ENCODE measurements at regions of chr17 and their contacts with region 1.

Region 1: GRCh38 chr17:43125133-43125966 is at the start of gene BRCA1:
- DNase-seq: peak; percentile 94 to 96
- H3K4me3 ChIP-seq: peak within 1 kb of the TSS; percentile 56 to 60
- H3K27ac ChIP-seq: peak within 1 kb of the TSS; percentile 75 to 81
- H3K4me1 ChIP-seq: peaks cover 0 to 25% (median 18%) of the 10 kb centered on the region in 4 donors
- H3K27me3 ChIP-seq: no peaks in the 10 kb centered on the region
- CTCF ChIP-seq: no peak

Region 2: DNA sequence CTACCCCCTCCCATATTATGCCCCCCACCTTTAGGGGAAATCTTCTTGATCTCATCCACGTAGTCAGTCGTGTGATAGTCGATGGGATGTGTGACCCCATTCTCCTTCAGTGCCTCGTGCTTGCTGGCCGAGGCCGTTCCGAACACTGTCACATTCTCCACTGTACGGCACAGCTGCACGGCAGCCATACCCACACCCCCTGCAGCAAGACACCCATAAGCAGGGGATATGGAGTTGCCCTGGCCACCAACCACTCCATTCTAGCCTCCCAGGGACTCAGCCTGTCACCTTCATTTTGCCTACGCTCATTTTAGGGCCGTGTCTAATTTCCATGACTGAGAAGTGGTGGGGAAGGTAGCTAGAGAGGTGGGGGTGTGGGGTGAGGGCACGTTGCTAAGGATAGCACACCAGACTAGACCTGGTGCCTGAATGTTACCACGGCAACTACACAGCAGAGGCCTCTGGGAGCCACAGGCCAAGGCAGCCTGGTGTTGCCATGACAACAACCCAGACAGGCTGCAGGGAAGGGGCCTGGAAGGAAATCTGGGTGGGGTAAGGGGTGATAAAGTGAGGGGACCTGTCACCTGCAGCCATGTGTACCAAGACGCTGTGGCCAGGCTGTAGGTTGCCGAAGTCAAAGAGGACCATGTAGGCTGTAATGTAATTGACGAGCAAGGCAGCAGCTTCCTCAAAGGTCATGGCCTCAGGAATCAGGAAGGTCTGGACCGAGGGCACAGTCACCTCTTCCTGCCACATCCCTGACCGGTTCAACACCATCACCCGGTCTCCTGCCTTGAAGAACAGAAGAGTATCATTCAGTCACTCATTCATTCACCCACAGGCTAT is 107.1 kb before region 1 on chr17:
- intact Hi-C with region 1: loop called (anchors 5 kb)
- DNase-seq: no peak
- H3K4me3 ChIP-seq: no peak overlapping the region
- H3K27ac ChIP-seq: peak overlapping the region in 1 of 2 donors; percentile 23
- H3K4me1 ChIP-seq: peaks cover 0 to 29% (median 22%) of the 10 kb centered on the region in 4 donors
- H3K27me3 ChIP-seq: no peaks in the 10 kb centered on the region
- CTCF ChIP-seq: no peak

Region 3: DNA sequence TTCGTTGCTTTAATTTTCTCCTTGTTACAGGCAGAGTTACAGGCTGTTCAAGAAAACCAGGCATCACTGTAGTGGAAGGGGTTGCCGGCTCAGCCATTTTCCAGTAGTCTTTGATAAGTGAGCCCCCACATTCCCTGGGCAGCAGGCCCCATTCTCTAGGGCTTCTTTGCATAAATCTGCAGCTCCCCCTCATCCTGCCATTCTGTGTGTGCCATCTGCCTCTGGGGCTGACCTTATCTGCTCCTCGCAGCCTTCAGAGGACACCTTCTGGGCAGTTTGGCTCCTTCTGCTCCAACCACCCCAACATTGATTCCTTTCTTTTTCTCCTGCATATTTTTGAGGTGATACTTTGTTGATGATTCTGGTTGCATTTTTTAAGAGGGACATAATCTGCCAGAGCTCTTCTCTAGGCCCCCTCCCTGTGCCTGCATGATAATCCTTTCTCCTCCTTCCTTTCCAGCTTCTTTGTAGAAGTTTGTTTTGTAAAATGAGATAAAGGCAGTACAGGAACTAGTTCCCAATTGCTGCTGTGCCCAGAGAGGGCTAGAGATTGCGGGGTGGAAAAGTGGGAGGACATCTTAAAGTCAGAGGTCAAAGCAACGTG is 83.2 kb before region 1 on chr17:
- intact Hi-C with region 1: no loop called
- DNase-seq: no peak
- H3K4me3 ChIP-seq: no peak overlapping the region
- H3K27ac ChIP-seq: no peak overlapping the region
- H3K4me1 ChIP-seq: no peaks in the 10 kb centered on the region
- H3K27me3 ChIP-seq: no peaks in the 10 kb centered on the region
- CTCF ChIP-seq: no peak

Region 4: GRCh38 chr17:43169561-43170139 is 44.3 kb after region 1 on chr17:
- intact Hi-C with region 1: loop called (anchors 5 kb)
- DNase-seq: peak; percentile 29 to 71
- H3K4me3 ChIP-seq: peak overlapping the region; percentile 85 to 86
- H3K27ac ChIP-seq: peak overlapping the region; percentile 96 to 98
- H3K4me1 ChIP-seq: peaks cover 11 to 44% (median 35%) of the 10 kb centered on the region in 4 donors
- H3K27me3 ChIP-seq: no peaks in the 10 kb centered on the region
- CTCF ChIP-seq: no peak